ENCODE measurements at regions of chr12 and their contacts with region 1.

Region 1: DNA sequence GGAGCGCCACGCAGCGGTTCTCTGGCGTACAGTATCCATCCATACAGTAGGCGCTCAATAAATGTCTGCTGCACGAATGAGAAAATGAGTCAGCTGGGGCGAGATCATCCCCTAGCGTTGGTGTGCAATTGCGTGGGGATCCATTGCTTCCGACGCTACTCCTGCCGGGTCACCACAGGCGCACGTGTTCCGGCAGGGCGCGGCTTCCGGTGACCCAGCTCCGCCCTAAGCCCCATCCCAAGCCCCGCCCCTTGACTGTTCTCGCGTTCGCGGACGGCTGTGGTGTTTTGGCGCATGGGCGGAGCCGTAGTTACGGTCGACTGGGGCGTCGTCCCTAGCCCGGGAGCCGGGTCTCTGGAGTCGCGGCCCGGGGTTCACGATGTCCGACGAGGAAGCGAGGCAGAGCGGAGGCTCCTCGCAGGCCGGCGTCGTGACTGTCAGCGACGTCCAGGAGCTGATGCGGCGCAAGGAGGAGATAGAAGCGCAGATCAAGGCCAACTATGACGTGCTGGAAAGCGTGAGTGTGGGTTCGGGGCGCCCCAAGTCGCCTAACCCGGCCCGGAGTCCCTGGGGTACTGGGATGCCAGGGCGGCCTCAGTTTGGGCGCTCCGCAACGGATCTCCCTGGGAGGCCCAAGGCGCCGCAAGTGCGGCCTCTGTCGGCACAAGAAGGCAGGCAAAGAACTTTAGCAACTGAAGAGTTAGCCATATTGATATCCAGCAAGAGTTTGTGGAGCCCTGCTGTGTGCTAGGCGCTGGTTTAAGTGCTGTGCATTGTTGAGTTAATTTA is at the start of gene PSMD9:
- DNase-seq: peak; percentile 97 to 99 (median 98)
- H3K4me3 ChIP-seq: peak within 1 kb of the TSS; percentile 77 to 88
- H3K4me3 Mint-ChIP-seq: peak within 1 kb of the TSS; percentile 96 to 99 (median 98)
- H3K27ac ChIP-seq: peak within 1 kb of the TSS; percentile 91
- H3K27ac Mint-ChIP-seq: peak within 1 kb of the TSS; percentile 99 to 100 (median 99)
- H3K4me1 ChIP-seq: peaks cover 29% of the 10 kb centered on the region
- H3K4me1 Mint-ChIP-seq: peaks cover 19 to 43% (median 33%) of the 10 kb centered on the region in 4 donors
- H3K27me3 ChIP-seq: no peaks in the 10 kb centered on the region
- H3K27me3 Mint-ChIP-seq: peaks cover 0 to 3% of the 10 kb centered on the region in 2 donors
- total RNA-seq, gene PSMD9: 41.4 to 42.7 TPM

Region 2: DNA sequence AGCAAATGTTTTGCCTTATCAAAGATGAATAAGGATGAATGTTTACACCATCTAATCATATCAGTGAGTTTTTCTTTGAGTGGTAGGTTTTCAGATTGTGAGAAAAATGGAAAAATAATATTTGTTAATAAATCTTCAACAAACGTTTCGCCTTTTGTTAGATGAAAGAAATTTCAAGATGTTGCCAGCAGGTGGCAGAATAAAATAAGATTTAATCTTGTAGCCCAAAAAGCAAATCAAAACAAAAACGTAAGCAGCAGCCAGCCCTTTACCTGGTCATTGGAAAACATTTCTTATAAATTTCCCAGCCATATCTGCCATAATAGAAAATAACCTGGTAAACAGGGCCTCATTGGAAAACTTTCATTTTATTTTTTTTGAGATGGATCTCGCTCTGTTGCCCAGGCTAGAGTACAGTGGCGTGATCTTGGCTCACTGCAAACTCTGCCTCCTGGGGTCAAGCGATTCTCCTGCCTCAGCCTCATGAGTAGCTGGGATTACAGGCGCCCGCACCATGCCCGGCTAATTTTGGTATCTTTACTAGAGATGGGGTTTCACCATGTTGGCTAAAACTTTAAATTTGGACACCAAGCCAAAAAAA is 191.5 kb before region 1 on chr12:
- CTCF ChIA-PET with region 1: interaction called, 3 read pairs
- POLR2A ChIA-PET with region 1: no interaction called
- intact Hi-C with region 1: loop called (anchors 1 kb)
- DNase-seq: peak in 4 of 5 donors; percentile 61 to 70 (median 67)
- H3K4me3 ChIP-seq: no peak overlapping the region
- H3K4me3 Mint-ChIP-seq: no peak overlapping the region
- H3K27ac ChIP-seq: no peak overlapping the region
- H3K27ac Mint-ChIP-seq: peak overlapping the region in 1 of 7 donors; percentile 19
- H3K4me1 ChIP-seq: no peaks in the 10 kb centered on the region
- H3K4me1 Mint-ChIP-seq: peaks cover 0 to 5% (median 2%) of the 10 kb centered on the region in 4 donors
- H3K27me3 ChIP-seq: no peaks in the 10 kb centered on the region
- H3K27me3 Mint-ChIP-seq: no peaks in the 10 kb centered on the region